ENCODE measurements at regions of chr4 and their contacts with region 1.

Region 1: GRCh38 chr4:118034053-118034785 is at the start of gene NDST3:
- DNase-seq: peak; percentile 64

Region 2: DNA sequence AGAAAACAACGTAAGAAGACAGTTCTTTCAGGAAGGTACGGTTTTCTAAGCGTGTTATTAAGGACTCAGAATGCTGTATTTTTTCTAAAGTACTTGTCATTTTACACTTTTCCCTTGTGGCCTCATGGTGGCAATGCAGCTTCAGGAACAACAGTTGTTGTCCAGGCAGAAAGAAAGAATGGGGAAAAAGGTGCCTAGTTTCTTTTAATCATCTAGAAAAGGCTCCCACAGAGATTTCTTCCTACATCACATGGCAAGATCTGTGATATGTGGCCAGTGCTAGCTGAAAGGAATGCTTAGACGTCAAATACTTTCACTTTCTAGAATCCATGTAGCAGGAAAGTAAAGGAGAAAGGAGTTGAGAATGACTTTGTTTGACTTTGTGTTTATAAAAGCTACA is 899.8 kb before region 1 on chr4:
- CTCF ChIA-PET with region 1: interaction called, 15 read pairs
- POLR2A ChIA-PET with region 1: no interaction called
- DNase-seq: peak; percentile 37

Region 3: DNA sequence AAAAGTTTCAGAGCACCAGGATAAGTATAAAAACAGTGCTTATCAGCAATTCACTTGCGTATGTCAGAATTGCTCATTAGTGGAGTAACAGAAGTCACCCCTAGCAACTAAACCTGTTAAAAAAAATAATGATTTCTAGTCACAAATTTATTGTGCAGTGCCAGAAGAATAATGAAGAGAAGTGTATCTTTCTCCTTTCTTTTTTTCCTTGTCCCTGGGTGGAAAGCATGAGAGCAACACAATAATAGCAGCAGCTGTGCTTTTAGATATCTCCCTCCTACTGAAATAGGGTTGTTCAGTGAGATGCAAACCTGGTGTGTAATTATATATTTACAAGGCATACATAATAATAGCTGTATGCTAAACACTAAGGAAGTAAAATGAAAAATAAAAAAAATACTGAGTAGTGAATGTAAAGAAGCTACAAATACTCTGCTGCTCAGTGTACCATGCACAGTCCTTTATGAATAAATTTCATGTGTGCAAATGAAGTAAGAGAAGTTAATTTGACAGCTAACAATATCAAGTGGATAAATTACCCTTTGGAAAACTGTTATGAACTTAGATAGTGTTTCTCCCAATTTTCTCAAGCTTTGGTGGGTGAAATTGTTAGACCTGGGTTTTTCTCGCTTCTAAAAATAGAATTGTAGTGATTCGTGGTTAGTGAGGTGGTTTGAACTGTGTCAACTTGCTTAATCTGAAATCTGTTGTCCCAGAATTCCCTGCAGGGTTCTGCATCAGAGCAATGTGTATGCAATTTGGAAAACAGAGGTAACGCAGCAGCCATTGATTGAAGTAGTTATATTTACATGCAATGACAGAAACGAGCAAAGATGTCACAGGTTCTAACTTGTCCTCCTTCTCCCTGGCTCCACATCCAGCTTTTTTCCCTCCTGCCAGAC is 125.7 kb before region 1 on chr4:
- CTCF ChIA-PET with region 1: no interaction called
- POLR2A ChIA-PET with region 1: no interaction called
- DNase-seq: no peak

Region 4: GRCh38 chr4:118005883-118006282 is 28.3 kb before region 1 on chr4:
- CTCF ChIA-PET with region 1: no interaction called
- POLR2A ChIA-PET with region 1: no interaction called
- DNase-seq: no peak

Region 5: DNA sequence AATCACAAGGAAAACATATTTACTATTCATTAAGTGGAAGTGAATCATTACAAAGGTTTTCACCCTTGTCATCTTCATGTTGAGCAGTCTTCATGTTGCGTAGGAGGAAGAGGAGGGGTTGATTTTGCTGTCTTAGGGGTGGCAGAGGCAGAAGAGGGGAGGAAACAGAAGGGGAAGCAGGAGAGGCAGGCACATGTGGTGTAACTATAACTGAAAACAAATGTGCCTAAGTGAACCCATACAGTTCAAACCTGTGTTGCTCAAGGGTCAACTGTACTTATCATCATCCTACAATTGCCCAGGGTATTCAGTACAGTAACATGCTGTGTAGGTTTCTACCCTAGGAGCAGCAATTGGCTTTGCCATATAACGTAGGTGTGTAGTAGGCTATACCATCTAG is 901.6 kb after region 1 on chr4:
- CTCF ChIA-PET with region 1: no interaction called
- POLR2A ChIA-PET with region 1: no interaction called
- DNase-seq: no peak

Measured in HEK293T (cell line).